OCI-LY7 (cell line): ENCODE measurements at regions of chr11 and their contacts with region 1.

Region 1: GRCh38 chr11:8911029-8911826 is at the start of gene AKIP1:
- DNase-seq: peak; percentile 89
- H3K4me3 ChIP-seq: peak within 1 kb of the TSS; percentile 77
- H3K27ac ChIP-seq: peak within 1 kb of the TSS; percentile 40
- H3K4me1 ChIP-seq: peaks cover 23% of the 10 kb centered on the region
- CTCF ChIP-seq: no peak
- total RNA-seq, gene AKIP1: 16.9 and 25.2 TPM in 2 replicates

Region 2: DNA sequence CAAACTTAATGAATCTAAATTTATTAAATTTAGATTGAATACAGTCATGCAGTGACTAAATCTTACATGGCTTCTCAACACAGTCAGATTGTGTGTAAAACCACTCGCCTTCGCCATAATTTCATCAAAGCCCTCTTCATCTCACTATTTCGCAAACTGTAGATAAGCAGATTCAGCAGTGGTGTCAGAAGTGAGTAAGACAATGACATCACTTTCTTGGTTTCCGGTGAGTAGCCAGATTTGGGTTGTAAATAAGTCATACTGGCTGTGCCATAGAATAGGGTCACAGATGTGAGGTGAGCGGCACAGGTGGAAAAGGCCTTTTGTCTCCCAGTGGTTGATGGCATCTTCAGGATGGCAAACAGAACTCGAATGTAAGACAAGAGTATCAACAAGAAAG is 983.6 kb before region 1 on chr11:
- CTCF ChIA-PET with region 1: interaction called, 24 read pairs
- POLR2A ChIA-PET with region 1: no interaction called
- intact Hi-C with region 1: no loop called
- DNase-seq: no peak
- H3K4me3 ChIP-seq: no peak overlapping the region
- H3K27ac ChIP-seq: no peak overlapping the region
- H3K4me1 ChIP-seq: no peaks in the 10 kb centered on the region
- CTCF ChIP-seq: no peak

Region 3: DNA sequence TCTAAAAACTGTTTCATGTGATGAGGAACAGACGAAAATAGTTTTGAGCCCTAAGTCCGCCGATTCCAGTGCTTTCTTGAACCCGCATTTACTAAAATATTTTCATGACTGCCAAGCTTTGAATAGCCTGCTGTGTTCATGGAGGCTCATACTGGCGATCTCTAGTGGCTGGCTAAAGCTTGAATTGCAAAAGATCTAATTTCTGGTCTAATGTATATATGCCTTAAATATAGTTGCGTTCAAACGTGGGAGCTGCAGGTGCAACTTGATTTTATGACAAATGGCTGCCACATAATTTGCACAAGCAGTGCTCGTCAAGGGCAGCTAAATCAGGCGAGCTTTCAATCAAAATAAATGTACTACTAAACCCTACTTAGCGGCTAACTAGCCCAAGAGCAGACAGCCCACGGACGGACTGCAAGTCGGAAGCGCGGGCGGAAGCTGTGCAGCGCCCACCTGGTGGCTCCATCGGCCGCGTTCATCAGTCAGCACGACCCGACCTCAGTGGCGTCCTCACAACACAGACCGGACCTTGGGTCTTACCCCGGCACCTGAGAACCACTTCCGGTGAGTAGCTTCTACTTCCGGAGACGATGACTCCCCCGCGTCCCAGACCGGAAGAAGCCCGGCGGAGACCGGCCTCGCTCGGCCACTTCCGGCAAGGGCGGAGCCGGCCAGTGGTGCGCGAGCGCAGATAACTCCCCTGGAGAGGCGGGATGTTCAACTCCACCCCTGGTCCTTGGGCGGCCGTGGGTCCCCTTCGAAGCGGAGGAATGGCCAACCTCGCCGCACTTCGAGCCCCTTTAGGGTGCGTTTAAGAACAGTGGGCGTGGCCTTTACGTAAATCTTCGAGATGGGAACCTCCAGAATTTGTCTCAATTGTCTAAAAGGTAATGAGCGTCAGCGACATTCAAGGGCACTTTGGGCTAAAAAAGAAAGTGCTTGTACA is 222.5 kb before region 1 on chr11:
- CTCF ChIA-PET with region 1: no interaction called
- POLR2A ChIA-PET with region 1: interaction called, 5 read pairs
- intact Hi-C with region 1: loop called (anchors 5 kb)
- DNase-seq: peak; percentile 98
- H3K4me3 ChIP-seq: peak overlapping the region; percentile 88
- H3K27ac ChIP-seq: peak overlapping the region; percentile 93
- H3K4me1 ChIP-seq: peaks cover 53% of the 10 kb centered on the region
- CTCF ChIP-seq: peak; percentile 42

Region 4: DNA sequence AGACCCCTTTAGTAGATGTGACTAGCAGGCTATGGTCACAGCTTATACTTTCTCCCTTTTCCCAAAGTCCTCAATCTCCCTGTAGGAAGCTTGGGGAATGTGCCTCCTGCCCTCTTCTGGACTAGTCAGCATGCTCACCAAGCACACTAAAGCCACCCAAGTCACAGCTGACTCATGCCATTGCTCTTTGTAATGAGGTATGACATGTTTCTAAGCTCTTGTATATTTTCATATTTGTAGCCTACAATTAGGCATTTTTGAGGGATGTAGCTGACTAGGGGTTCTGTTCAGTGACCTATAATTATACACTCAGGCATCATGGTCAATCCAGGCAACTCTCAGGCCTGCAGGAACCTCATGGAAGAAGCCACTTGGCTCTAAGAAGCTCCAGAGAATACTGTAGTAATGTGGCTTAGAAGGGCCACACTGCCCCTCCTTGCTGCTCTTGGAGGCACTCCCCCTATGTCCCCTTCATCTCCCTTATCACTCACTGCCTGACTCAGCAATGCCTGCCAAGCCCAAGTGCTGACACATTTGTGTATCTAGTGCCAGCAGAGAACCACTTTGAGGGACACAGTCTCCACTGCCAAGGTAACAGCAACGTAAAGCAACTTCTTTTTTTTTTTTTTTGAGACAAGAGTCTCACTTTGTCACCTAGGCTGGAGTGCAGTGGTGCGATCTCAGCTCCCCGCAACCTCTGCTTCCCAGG is 142.4 kb before region 1 on chr11:
- CTCF ChIA-PET with region 1: no interaction called
- POLR2A ChIA-PET with region 1: no interaction called
- intact Hi-C with region 1: no loop called
- DNase-seq: no peak
- H3K4me3 ChIP-seq: no peak overlapping the region
- H3K27ac ChIP-seq: no peak overlapping the region
- H3K4me1 ChIP-seq: no peaks in the 10 kb centered on the region
- CTCF ChIP-seq: no peak

Region 5: GRCh38 chr11:8964324-8965320 is 53.4 kb after region 1 on chr11 and contains the start of gene TMEM9B:
- CTCF ChIA-PET with region 1: interaction called, 8 read pairs
- POLR2A ChIA-PET with region 1: interaction called, 6 read pairs
- intact Hi-C with region 1: loop called (anchors 1 kb)
- DNase-seq: peak; percentile 88
- H3K4me3 ChIP-seq: peak within 1 kb of the TSS; percentile 88
- H3K27ac ChIP-seq: peak within 1 kb of the TSS; percentile 60
- H3K4me1 ChIP-seq: peaks cover 20% of the 10 kb centered on the region
- CTCF ChIP-seq: no peak
- total RNA-seq, gene TMEM9B: 8.5 and 13.4 TPM in 2 replicates

Region 6: DNA sequence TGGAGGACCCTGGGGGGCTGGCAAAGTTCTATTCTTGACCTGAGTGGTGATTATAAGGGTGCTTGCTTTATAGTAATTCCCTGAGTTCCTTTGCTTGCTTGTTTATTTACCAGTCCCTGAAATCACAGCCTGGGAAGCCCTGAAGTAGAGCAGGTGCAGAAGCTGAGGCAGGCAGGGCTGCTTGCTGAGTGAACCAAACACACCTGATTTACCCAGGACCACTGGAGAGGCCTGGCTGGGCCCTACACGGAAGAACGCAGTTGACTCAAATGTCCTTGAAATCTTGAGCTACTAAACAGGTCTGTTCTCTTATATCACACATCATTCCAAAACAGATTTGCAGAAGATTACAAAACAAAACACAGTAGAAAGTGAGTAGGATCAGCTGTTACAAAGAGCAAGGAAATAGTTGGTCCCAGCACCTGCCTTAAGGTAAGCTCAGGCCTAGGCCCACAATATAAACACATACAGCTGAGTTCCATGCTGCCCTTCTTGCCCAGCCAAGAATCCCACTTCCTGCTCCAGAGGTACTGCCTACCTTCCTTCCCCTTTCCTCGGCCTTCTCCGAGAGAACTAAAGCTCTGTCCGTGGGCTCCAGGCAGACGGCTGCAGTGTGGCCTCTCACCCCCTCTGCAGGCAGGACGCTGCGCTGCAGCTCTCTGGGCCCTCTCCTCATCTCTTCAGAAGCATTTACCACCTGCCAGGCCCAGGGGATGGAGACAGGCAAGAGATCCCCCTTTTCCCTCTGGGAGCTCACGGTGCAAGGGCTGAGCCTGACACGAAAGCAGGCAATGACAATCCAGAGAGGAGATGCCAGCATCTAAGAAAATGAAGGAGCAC is 226.3 kb after region 1 on chr11:
- CTCF ChIA-PET with region 1: no interaction called
- POLR2A ChIA-PET with region 1: no interaction called
- intact Hi-C with region 1: loop called (anchors 1 kb)
- DNase-seq: peak; percentile 55
- H3K4me3 ChIP-seq: no peak overlapping the region
- H3K27ac ChIP-seq: no peak overlapping the region
- H3K4me1 ChIP-seq: no peaks in the 10 kb centered on the region
- CTCF ChIP-seq: peak; percentile 89

Region 7: DNA sequence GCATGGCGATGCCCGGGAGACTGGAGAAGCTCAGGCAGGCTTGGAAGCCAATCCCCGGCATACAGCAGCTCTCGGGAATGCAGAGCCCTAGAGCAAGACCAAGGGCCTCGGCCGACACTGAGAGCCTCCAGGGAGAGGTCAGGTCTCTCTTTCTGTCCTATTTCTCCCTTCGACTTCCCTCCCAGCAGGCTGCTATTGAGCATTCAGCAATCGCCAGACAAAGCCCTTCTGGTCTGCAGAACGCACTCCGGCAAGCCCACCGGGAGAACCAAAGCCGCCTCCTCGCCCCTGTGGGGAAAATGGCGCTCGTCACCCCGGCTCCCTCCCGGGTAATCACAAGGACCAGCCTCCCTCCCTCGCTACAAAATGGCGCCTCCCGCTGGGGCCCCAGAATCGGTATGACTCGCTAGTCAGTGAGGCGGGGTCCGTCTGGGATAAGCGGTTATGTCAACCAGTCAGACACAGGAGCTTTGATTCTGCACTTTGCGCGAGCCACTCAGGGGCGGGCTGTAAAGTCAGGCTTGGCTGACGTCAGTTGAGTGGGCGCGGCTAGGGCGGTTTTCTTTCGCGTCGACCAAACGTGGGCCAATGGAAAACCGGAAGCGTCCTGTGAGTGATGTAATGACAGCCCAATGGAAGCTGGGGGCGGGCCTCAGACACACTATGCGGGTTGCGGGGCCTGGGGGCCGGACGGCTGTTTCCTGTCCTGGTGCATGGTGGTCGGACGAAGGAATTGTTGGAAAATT is 549.3 kb after region 1 on chr11 and contains the start of gene ZNF143:
- CTCF ChIA-PET with region 1: no interaction called
- POLR2A ChIA-PET with region 1: no interaction called
- intact Hi-C with region 1: loop called (anchors 5 kb)
- DNase-seq: peak; percentile 100
- H3K4me3 ChIP-seq: peak within 1 kb of the TSS; percentile 97
- H3K27ac ChIP-seq: peak within 1 kb of the TSS; percentile 97
- H3K4me1 ChIP-seq: peaks cover 28% of the 10 kb centered on the region
- CTCF ChIP-seq: no peak
- total RNA-seq, gene ZNF143: 25.0 and 36.2 TPM in 2 replicates

Region 8: DNA sequence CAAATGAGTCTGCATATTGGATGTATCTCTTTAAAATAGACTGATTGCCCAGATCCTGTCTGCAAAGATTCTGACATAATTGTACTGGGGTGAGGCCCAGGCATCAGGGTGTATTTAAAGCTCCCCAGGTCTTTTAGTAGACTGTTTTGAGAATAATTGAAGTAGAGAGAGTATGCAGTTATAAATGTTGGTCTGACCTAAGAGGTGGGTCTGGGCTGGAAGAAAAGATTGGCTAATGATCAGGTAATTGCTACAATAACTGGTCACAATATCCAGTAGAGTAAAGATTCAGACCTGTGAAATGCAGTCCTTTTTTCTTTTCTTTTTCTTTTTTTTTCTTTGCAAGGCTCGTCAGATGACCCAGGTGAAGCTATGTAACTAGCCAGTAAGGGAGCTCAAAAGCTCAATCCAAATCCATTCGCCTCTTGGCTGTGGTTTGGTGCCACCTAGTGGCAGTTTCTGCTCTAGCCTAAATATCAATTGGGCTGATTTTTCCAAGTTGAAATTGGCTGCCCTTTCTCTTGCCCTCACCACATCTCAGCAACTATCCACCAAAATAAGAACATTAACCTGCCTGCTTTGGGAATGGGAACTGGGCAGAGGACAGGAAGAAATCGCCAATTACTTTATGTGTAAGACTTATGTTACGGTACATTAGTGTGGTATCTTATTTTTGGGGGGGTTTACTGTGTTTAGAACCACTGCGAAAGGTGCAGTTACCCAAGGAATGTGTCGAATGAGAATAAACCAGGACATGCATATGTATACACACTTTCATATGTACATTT is 595.5 kb after region 1 on chr11:
- CTCF ChIA-PET with region 1: no interaction called
- POLR2A ChIA-PET with region 1: no interaction called
- intact Hi-C with region 1: loop called (anchors 5 kb)
- DNase-seq: peak; percentile 85
- H3K4me3 ChIP-seq: no peak overlapping the region
- H3K27ac ChIP-seq: no peak overlapping the region
- H3K4me1 ChIP-seq: peaks cover 4% of the 10 kb centered on the region
- CTCF ChIP-seq: peak; percentile 99